ENCODE measurements at regions of chr2 and their contacts with region 1.

Region 1: GRCh38 chr2:216394881-216395280 is 17.4 kb upstream of the SMARCAL1 start:
- DNase-seq: no peak
- ATAC-seq: no peak
- H3K4me3 ChIP-seq: no peak overlapping the region
- H3K4me3 Mint-ChIP-seq: no peak overlapping the region
- H3K27ac ChIP-seq: no peak overlapping the region
- H3K27ac Mint-ChIP-seq: no peak overlapping the region
- H3K4me1 ChIP-seq: peaks cover 0 to 5% of the 10 kb centered on the region in 2 experiments
- H3K4me1 Mint-ChIP-seq: peaks cover 2 to 9% (median 7%) of the 10 kb centered on the region in 3 donors
- H3K27me3 ChIP-seq: peaks cover 0 to 5% of the 10 kb centered on the region in 2 experiments
- H3K27me3 Mint-ChIP-seq: peaks cover 0 to 4% of the 10 kb centered on the region in 2 donors

Region 2: DNA sequence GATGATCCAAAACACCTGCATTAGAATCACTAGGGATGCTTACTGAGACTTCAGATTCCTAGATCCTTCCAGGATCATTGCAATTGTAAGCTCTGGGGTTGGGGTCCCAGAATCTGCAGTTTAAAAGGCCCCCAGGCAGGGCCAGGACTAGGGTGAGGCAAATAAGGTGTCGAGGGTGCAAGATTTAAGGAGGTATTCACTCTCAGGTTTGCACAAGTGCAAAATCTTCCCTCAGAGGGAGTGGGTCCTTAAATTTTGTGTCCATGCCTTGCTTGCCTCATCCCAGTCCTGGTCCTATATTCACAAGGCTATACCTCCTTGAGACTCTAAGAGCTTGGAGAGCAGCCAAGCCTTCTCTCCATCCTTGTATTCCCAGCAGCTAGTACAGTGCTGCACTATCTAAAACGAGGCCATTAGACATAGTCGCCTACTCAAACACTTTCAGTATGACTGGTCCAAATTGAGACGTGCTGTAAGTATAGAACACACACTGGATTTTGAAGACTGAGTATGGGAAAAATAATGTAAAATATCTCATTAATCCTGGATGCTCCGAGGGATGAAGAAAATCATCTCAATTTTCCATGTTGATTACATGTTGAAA is 349.9 kb before region 1 on chr2:
- CTCF ChIA-PET with region 1: no interaction called
- POLR2A ChIA-PET with region 1: no interaction called
- DNase-seq: no peak
- ATAC-seq: no peak
- H3K4me3 ChIP-seq: no peak overlapping the region
- H3K4me3 Mint-ChIP-seq: no peak overlapping the region
- H3K27ac ChIP-seq: no peak overlapping the region
- H3K27ac Mint-ChIP-seq: no peak overlapping the region
- H3K4me1 ChIP-seq: no peaks in the 10 kb centered on the region
- H3K4me1 Mint-ChIP-seq: no peaks in the 10 kb centered on the region
- H3K27me3 ChIP-seq: no peaks in the 10 kb centered on the region
- H3K27me3 Mint-ChIP-seq: no peaks in the 10 kb centered on the region

Region 3: DNA sequence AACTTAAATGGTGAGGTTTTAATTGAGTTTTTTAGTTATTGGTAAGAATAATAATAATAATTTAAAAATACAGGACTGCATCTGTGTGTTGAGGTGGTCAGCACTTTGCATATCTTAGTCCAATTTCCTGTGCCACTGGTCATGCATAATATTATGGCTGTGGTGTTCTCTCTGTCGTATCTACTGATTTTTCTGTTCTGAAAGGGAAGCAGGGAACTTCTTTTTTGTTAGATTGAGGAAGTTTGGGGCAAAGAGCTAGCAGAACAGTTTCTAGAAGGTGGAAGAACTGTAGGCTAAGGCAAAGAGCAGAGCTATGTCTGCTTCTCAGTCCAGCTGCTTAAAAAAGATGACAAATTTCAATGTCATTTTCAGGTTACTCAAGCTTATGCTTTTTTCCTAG is 211.4 kb before region 1 on chr2:
- CTCF ChIA-PET with region 1: no interaction called
- POLR2A ChIA-PET with region 1: no interaction called
- DNase-seq: no peak
- ATAC-seq: no peak
- H3K4me3 ChIP-seq: no peak overlapping the region
- H3K4me3 Mint-ChIP-seq: no peak overlapping the region
- H3K27ac ChIP-seq: no peak overlapping the region
- H3K27ac Mint-ChIP-seq: peak overlapping the region; percentile 20 to 60
- H3K4me1 ChIP-seq: peaks cover 9 to 12% of the 10 kb centered on the region in 2 experiments
- H3K4me1 Mint-ChIP-seq: peaks cover 78 to 84% (median 80%) of the 10 kb centered on the region in 3 donors
- H3K27me3 ChIP-seq: no peaks in the 10 kb centered on the region
- H3K27me3 Mint-ChIP-seq: no peaks in the 10 kb centered on the region

Region 4: DNA sequence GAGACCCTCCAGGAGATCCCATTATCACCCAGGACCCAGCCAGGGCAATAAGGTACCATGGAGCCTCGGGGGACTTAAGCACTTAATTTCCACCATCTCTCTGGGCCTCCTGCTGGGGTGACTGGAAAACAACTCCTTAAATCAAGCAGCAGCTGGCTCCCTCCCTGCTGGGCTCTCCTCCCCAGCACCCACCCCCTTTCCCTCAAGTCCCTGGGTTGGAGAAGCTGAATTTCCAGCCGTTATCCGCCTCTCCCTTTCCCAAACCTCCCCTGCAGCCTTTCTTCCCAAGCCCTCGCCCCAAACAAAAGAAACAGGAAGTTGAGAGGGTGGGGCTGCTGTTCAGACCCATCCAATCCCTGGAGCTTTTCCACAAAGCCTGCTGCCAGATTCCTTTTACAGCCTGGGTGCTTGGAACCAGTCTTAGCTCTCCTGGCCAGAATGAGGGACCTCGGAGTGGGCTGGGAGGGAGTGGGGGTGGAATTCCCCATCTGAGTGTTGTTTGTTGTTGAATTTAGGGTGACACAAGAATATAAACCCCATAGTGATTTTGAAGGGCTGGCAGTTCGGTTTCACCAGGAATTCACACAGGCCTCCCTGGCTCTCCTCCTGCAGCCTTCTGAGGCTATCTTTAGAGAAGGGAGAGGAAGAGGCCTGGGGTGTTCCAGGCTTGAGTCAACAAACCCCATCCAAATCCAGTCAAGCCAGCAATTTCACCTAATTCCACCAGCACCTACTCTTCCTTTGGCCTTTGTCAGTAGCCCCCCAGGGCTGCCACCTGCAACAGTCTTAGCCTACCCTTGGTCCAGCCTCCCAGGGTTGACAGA is 54.9 kb before region 1 on chr2:
- CTCF ChIA-PET with region 1: interaction called in 1 of 2 experiments, 16 read pairs
- POLR2A ChIA-PET with region 1: no interaction called
- DNase-seq: no peak
- ATAC-seq: no peak
- H3K4me3 ChIP-seq: no peak overlapping the region
- H3K4me3 Mint-ChIP-seq: no peak overlapping the region
- H3K27ac ChIP-seq: no peak overlapping the region
- H3K27ac Mint-ChIP-seq: peak overlapping the region in 1 of 2 donors; percentile 4
- H3K4me1 ChIP-seq: peaks cover 0 to 14% of the 10 kb centered on the region in 2 experiments
- H3K4me1 Mint-ChIP-seq: peaks cover 21 to 28% (median 25%) of the 10 kb centered on the region in 3 donors
- H3K27me3 ChIP-seq: no peaks in the 10 kb centered on the region
- H3K27me3 Mint-ChIP-seq: no peaks in the 10 kb centered on the region

Measured in T-cell (primary cell).